ENCODE measurements at regions of chr2 and their contacts with region 1.

Region 1: GRCh38 chr2:189412330-189412953 is 28.8 kb upstream of the WDR75 start:
- DNase-seq: peak in 13 of 14 experiments; percentile 6 to 75 (median 26)
- ATAC-seq: peak; percentile 56
- H3K4me3 ChIP-seq: no peak overlapping the region
- H3K4me3 Mint-ChIP-seq: no peak overlapping the region
- H3K27ac ChIP-seq: no peak overlapping the region
- H3K27ac Mint-ChIP-seq: no peak overlapping the region
- H3K4me1 ChIP-seq: no peaks in the 10 kb centered on the region
- H3K4me1 Mint-ChIP-seq: peaks cover 9% of the 10 kb centered on the region
- H3K27me3 ChIP-seq: no peaks in the 10 kb centered on the region
- H3K27me3 Mint-ChIP-seq: no peaks in the 10 kb centered on the region
- CTCF ChIP-seq: peak; percentile 88

Region 2: GRCh38 chr2:187499941-187500532 is 1912.4 kb before region 1 on chr2:
- CTCF ChIA-PET with region 1: no interaction called
- POLR2A ChIA-PET with region 1: no interaction called
- intact Hi-C with region 1: loop called (anchors 5 to 10 kb)
- DNase-seq: peak in 6 of 14 experiments; percentile 6 to 44 (median 31)
- ATAC-seq: no peak
- H3K4me3 ChIP-seq: no peak overlapping the region
- H3K4me3 Mint-ChIP-seq: no peak overlapping the region
- H3K27ac ChIP-seq: no peak overlapping the region
- H3K27ac Mint-ChIP-seq: no peak overlapping the region
- H3K4me1 ChIP-seq: no peaks in the 10 kb centered on the region
- H3K4me1 Mint-ChIP-seq: peaks cover 5% of the 10 kb centered on the region
- H3K27me3 ChIP-seq: no peaks in the 10 kb centered on the region
- H3K27me3 Mint-ChIP-seq: peaks cover 4% of the 10 kb centered on the region
- CTCF ChIP-seq: peak; percentile 57

Region 3: DNA sequence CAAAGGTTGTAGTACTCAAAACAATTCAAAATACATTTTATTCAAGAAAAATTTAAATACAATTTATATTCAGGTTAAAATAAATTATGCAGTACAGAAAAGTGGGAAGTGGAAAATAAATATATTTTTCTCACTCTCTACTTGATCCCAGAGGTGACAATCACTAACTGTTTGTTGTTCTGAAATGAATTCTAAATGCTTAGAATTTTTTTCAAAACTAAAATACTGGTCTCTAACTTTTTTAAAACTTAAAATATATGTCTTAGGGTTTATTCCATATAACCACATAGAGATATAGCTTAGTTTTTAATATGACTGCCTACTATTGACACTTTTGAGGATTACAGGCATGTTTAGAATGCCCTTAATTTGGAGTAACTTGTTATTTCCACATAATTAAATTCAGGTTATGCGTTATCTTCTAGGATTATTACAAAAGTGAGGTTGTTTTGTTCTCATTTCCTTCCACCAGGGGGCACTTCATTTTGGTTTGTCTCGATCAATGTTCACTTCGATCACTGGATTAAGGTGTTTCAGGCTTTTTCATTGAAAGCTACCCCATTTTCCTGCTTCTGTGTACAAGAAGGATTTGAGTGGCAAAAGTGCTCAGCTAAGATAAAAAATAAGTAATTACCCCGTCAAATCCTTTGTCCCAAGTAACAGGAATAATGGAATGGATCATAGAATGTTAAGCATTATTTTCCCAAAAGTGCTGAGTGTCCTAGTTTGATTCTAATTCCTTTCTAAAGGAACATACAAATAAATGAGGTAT is 1831.1 kb before region 1 on chr2:
- CTCF ChIA-PET with region 1: no interaction called
- POLR2A ChIA-PET with region 1: no interaction called
- intact Hi-C with region 1: loop called (anchors 5 kb)
- DNase-seq: peak in 4 of 14 experiments; percentile 3 to 41 (median 27)
- ATAC-seq: no peak
- H3K4me3 ChIP-seq: no peak overlapping the region
- H3K4me3 Mint-ChIP-seq: no peak overlapping the region
- H3K27ac ChIP-seq: no peak overlapping the region
- H3K27ac Mint-ChIP-seq: no peak overlapping the region
- H3K4me1 ChIP-seq: no peaks in the 10 kb centered on the region
- H3K4me1 Mint-ChIP-seq: peaks cover 9% of the 10 kb centered on the region
- H3K27me3 ChIP-seq: no peaks in the 10 kb centered on the region
- H3K27me3 Mint-ChIP-seq: no peaks in the 10 kb centered on the region
- CTCF ChIP-seq: peak; percentile 39

Region 4: DNA sequence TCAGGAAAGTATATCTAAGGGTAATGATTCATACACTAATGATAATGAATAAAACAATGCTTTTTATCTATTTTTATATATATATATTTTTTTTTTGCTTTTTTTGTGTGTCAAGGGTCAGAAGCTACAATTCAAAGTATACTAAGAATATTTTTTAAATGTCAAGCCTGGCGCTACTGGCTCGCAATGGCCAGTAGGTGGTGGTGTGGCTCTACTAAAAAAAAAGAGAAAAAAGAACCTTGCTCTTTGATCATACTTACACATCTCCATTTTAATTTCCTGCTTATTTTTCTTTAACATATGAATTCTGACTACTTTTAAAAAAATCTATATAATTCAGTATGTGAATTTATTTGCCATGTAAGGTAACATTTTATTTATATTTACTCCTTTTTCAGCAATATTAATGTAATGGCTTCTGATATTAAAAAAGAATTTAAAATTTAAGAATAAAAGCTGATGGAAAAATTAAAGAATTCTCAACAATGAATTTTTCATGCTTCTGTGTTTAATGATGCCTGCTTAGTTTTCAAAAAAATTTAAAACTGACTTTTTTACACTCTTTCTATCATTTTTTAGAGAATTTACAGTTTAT is 887.8 kb before region 1 on chr2:
- CTCF ChIA-PET with region 1: no interaction called
- POLR2A ChIA-PET with region 1: no interaction called
- intact Hi-C with region 1: loop called in 1 of 2 experiments (anchors 5 kb)
- DNase-seq: peak in 5 of 14 experiments; percentile 1 to 42 (median 11)
- ATAC-seq: no peak
- H3K4me3 ChIP-seq: no peak overlapping the region
- H3K4me3 Mint-ChIP-seq: no peak overlapping the region
- H3K27ac ChIP-seq: no peak overlapping the region
- H3K27ac Mint-ChIP-seq: no peak overlapping the region
- H3K4me1 ChIP-seq: no peaks in the 10 kb centered on the region
- H3K4me1 Mint-ChIP-seq: no peaks in the 10 kb centered on the region
- H3K27me3 ChIP-seq: no peaks in the 10 kb centered on the region
- H3K27me3 Mint-ChIP-seq: peaks cover 4% of the 10 kb centered on the region
- CTCF ChIP-seq: peak; percentile 56

Region 5: GRCh38 chr2:189096769-189097447 is 315.5 kb before region 1 on chr2:
- CTCF ChIA-PET with region 1: no interaction called
- POLR2A ChIA-PET with region 1: no interaction called
- intact Hi-C with region 1: loop called (anchors 1 kb)
- DNase-seq: no peak
- ATAC-seq: no peak
- H3K4me3 ChIP-seq: no peak overlapping the region
- H3K4me3 Mint-ChIP-seq: no peak overlapping the region
- H3K27ac ChIP-seq: no peak overlapping the region
- H3K27ac Mint-ChIP-seq: no peak overlapping the region
- H3K4me1 ChIP-seq: no peaks in the 10 kb centered on the region
- H3K4me1 Mint-ChIP-seq: no peaks in the 10 kb centered on the region
- H3K27me3 ChIP-seq: no peaks in the 10 kb centered on the region
- H3K27me3 Mint-ChIP-seq: no peaks in the 10 kb centered on the region
- CTCF ChIP-seq: no peak

Region 6: GRCh38 chr2:189142893-189143759 is 269.3 kb before region 1 on chr2:
- CTCF ChIA-PET with region 1: interaction called, 13 read pairs
- POLR2A ChIA-PET with region 1: no interaction called
- intact Hi-C with region 1: loop called (anchors 1 to 2 kb)
- DNase-seq: peak in 13 of 14 experiments; percentile 9 to 76 (median 30)
- ATAC-seq: peak; percentile 94
- H3K4me3 ChIP-seq: no peak overlapping the region
- H3K4me3 Mint-ChIP-seq: no peak overlapping the region
- H3K27ac ChIP-seq: no peak overlapping the region
- H3K27ac Mint-ChIP-seq: no peak overlapping the region
- H3K4me1 ChIP-seq: no peaks in the 10 kb centered on the region
- H3K4me1 Mint-ChIP-seq: no peaks in the 10 kb centered on the region
- H3K27me3 ChIP-seq: no peaks in the 10 kb centered on the region
- H3K27me3 Mint-ChIP-seq: no peaks in the 10 kb centered on the region
- CTCF ChIP-seq: peak; percentile 79